ENCODE measurements at regions of chr22 and their contacts with region 1.

Region 1: DNA sequence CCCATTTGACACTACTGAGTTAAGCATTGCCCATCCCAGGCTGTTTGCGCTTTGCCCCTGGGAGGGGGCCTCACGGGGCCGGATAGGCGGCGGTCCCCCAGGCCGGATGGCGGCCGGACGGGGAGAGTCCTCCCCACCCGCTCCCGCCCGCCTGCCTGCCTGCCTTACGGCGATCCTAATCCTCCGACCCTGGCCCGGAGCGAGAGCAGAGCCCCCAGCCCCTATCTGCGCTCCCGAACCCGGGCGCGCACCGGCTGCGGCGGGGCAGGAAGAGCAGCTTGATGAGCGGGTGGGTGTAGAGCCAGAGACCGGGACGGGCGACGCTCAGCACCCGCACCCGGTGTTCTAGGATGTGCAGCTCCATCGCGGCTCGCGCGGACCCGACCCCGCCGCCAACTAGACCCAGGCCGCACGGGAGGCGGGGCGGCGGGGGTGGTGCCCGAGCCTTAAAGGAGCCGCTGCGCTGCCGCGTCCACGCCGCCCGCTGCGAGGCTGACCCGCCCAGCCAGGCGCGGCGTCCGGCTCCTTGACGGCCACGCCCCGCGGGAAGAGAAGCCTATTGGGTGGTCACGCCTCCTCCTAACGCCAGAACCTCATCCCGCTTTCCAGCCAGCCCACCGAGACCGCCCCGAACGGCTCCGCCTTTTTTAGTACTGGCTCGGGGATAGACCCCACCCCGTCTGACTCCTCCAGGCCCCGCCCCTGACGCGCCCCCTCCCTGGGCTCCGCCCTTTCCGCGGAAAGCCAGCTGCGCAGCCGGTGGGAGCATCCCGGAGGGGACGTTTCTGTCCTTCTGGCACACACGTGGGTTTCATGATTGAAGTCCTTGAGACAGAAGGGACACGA is at the start of gene CASTOR1:
- DNase-seq: peak; percentile 97
- H3K4me3 ChIP-seq: peak within 1 kb of the TSS; percentile 64 to 91 (median 71)
- H3K27ac ChIP-seq: peak within 1 kb of the TSS; percentile 22
- H3K4me1 ChIP-seq: peaks cover 35% of the 10 kb centered on the region
- H3K27me3 ChIP-seq: no peaks in the 10 kb centered on the region
- CTCF ChIP-seq: no peak
- total RNA-seq, gene CASTOR1: 8.7 to 9.7 TPM

Region 2: DNA sequence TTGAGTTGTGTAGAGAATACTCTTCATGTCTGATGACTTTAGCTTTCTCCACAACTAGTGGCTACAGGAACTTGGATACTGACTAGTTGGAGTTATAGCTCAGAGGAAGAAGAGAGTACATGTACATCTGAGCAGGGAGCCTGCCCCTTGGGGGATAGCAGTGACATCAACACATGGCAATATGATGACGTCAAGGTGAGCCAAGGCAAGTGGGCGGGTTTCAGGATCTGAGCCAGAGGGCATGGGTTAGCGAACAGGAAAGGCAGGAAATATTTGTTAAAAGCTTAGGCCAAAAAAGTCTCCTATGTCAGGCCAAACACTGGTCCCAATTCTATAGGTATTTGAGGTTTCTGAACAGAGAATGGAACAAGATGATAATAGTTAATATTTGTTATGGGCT is 251.1 kb before region 1 on chr22:
- CTCF ChIA-PET with region 1: no interaction called
- dilution Hi-C with region 1: loop called (anchors 5 kb)
- in situ Hi-C with region 1: no loop called
- intact Hi-C with region 1: no loop called
- DNase-seq: peak; percentile 61
- H3K4me3 ChIP-seq: no peak overlapping the region
- H3K27ac ChIP-seq: no peak overlapping the region
- H3K4me1 ChIP-seq: peaks cover 12% of the 10 kb centered on the region
- H3K27me3 ChIP-seq: no peaks in the 10 kb centered on the region
- CTCF ChIP-seq: no peak

Region 3: GRCh38 chr22:30212363-30212995 is 76.9 kb before region 1 on chr22:
- CTCF ChIA-PET with region 1: no interaction called
- dilution Hi-C with region 1: no loop called
- in situ Hi-C with region 1: no loop called
- intact Hi-C with region 1: loop called (anchors 2 kb)
- DNase-seq: peak; percentile 99
- H3K4me3 ChIP-seq: no peak overlapping the region
- H3K27ac ChIP-seq: peak overlapping the region; percentile 96
- H3K4me1 ChIP-seq: peaks cover 63% of the 10 kb centered on the region
- H3K27me3 ChIP-seq: no peaks in the 10 kb centered on the region
- CTCF ChIP-seq: peak in 1 of 2 donors; percentile 37

Region 4: GRCh38 chr22:30262917-30263741 is 26.2 kb before region 1 on chr22:
- CTCF ChIA-PET with region 1: no interaction called
- dilution Hi-C with region 1: no loop called
- in situ Hi-C with region 1: no loop called
- intact Hi-C with region 1: loop called (anchors 1 kb)
- DNase-seq: no peak
- H3K4me3 ChIP-seq: no peak overlapping the region
- H3K27ac ChIP-seq: peak overlapping the region; percentile 62
- H3K4me1 ChIP-seq: peaks cover 15% of the 10 kb centered on the region
- H3K27me3 ChIP-seq: no peaks in the 10 kb centered on the region
- CTCF ChIP-seq: peak; percentile 90 to 96

Region 5: GRCh38 chr22:30312053-30312452 is 22.7 kb after region 1 on chr22:
- CTCF ChIA-PET with region 1: no interaction called
- dilution Hi-C with region 1: no loop called
- in situ Hi-C with region 1: no loop called
- intact Hi-C with region 1: loop called (anchors 1 kb)
- DNase-seq: peak; percentile 98
- H3K4me3 ChIP-seq: no peak overlapping the region
- H3K27ac ChIP-seq: peak overlapping the region; percentile 58
- H3K4me1 ChIP-seq: peaks cover 76% of the 10 kb centered on the region
- H3K27me3 ChIP-seq: no peaks in the 10 kb centered on the region
- CTCF ChIP-seq: no peak

Region 6: DNA sequence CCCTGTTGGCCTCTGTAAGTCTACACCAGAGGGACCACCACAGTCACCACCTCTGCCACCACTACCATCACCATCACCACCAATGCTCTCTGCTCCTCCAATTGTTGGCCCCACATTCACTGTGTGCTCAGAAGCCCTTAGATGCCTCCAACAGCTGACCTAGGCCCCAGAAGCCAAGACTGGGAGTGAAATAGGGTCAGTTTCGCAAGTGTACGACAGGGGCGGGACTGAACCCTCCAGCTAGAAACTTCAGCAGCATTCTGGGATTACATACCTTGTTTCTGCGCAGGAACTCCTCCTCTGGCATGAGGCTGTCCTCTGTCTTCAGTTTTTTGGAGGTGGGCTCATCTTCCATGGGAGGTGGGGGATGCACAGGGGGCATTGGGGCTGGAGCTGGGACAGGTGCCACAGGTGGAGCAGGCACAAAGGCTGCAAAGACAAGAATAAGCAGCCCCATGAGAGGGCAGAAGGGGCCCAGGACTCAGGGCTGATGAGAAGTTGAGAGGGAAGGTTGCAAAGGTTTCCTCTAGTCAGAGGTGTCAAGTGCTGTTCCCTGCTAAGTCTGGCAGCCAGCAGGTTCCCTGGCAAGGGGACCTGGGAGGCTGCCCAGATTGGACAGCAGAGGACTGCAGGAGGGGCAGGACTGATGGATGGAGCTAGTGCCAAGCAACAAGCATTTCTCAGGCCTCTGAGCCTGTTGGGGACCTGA is 47.5 kb after region 1 on chr22:
- CTCF ChIA-PET with region 1: interaction called, 4 read pairs
- dilution Hi-C with region 1: loop called (anchors 5 kb)
- in situ Hi-C with region 1: loop called in 1 of 2 experiments (anchors 10 kb)
- intact Hi-C with region 1: no loop called
- DNase-seq: no peak
- H3K4me3 ChIP-seq: no peak overlapping the region
- H3K27ac ChIP-seq: no peak overlapping the region
- H3K4me1 ChIP-seq: no peaks in the 10 kb centered on the region
- H3K27me3 ChIP-seq: no peaks in the 10 kb centered on the region
- CTCF ChIP-seq: no peak

Region 7: GRCh38 chr22:30348809-30349208 is 59.5 kb after region 1 on chr22:
- CTCF ChIA-PET with region 1: no interaction called
- dilution Hi-C with region 1: no loop called
- in situ Hi-C with region 1: no loop called
- intact Hi-C with region 1: no loop called
- DNase-seq: no peak
- H3K4me3 ChIP-seq: no peak overlapping the region
- H3K27ac ChIP-seq: no peak overlapping the region
- H3K4me1 ChIP-seq: no peaks in the 10 kb centered on the region
- H3K27me3 ChIP-seq: no peaks in the 10 kb centered on the region
- CTCF ChIP-seq: no peak

Region 8: GRCh38 chr22:30485362-30485988 is 196.1 kb after region 1 on chr22:
- CTCF ChIA-PET with region 1: no interaction called
- dilution Hi-C with region 1: no loop called
- in situ Hi-C with region 1: no loop called
- intact Hi-C with region 1: loop called (anchors 1 kb)
- DNase-seq: peak; percentile 35
- H3K4me3 ChIP-seq: no peak overlapping the region
- H3K27ac ChIP-seq: no peak overlapping the region
- H3K4me1 ChIP-seq: no peaks in the 10 kb centered on the region
- H3K27me3 ChIP-seq: no peaks in the 10 kb centered on the region
- CTCF ChIP-seq: peak; percentile 83 to 90

Region 9: DNA sequence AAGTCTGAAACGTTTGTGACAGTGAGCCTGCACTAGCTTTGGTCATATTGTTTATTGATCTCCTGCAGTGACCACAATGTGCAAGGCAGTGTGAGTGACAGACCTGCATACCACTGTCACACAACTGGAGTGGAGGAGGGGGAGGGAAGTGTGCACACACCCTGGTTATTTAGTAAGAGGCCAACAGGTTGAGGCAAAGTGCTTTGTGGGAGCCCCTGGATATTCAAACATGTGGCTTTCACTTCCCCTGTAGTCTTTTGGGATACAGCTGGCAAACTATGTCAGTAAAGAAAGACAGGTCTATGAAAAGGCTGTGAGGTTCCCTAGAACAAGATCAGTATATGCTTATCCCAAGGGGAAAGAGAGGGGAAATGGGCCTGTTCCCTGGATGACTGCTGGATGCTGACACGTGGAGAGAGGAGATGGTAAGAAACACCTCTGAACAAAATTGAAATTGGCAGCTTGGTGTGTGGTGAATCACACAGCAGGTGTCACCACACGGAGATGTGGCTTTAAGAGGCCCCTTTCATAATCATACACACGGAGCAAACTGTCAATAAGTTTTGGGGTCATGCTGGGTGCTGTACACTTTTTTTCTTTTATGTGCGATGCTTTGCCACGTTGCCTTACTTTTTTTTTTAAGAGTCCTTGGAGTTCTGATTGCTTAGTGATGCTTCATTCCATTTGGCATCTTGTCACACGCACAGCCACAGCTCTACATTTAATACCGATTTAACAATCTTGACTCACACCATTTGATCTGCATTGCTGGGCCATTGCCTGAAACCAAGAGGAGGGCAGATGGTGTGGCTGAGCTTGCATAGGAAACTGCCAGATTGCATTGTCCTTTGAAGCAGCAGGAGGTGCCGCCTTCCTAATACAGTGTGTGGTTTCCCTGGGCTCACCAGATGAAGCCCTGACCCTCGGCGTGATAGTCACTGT is 416.6 kb after region 1 on chr22:
- CTCF ChIA-PET with region 1: no interaction called
- dilution Hi-C with region 1: no loop called
- in situ Hi-C with region 1: no loop called
- intact Hi-C with region 1: no loop called
- DNase-seq: no peak
- H3K4me3 ChIP-seq: no peak overlapping the region
- H3K27ac ChIP-seq: no peak overlapping the region
- H3K4me1 ChIP-seq: peaks cover 5% of the 10 kb centered on the region
- H3K27me3 ChIP-seq: no peaks in the 10 kb centered on the region
- CTCF ChIP-seq: no peak